Activated T-helper 1 cell treated with anti-CD3 and anti-CD28 coated beads, Interleukin-12 subunit alpha, Interleukin-12 subunit beta, Interleukin-2, Interleukin-4 antibody, amounts not matched to agents 30 ng/mL and 10 ng/mL and 1 ng/mL, durations not matched to agents 14 hours and 24 hours and 36 hours (primary cell): ENCODE measurements at regions of chr11 and their contacts with region 1.

Region 1: DNA sequence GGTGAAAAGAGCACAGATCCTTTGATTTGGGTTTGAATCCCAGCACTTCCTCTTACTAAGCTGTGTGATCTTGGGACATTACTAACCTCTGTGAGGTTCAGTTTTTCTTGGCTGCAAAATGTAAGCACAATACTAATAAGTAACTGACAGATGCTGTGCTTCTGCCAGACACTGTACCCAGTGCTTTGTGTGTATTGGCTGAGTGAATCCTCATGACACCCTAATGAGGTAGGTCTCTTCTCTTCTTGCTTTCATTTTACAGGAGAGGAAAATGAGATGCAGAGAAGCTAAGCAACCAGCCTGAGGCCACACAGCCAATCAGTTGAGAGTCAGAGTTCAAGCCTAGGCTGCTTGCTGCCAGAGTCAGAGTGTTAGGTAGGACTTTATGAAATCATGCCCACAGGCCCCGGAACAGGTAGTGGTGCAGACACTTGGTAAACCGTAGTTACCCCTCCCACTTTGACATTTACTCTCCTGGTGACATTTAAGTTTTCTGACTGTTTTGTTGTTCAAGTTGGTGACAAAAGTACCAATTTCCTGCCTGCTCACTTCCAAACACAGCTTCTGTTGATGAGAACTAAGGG is 21.2 kb downstream of the PTPRJ start:
- DNase-seq: peak; percentile 87
- H3K4me3 Mint-ChIP-seq: peak overlapping the region; percentile 72
- H3K27ac Mint-ChIP-seq: peak overlapping the region; percentile 97
- H3K4me1 Mint-ChIP-seq: peaks cover 82% of the 10 kb centered on the region
- H3K27me3 Mint-ChIP-seq: no peaks in the 10 kb centered on the region

Region 2: GRCh38 chr11:47642099-47642855 is 359.3 kb before region 1 on chr11 and contains the start of gene MTCH2:
- intact Hi-C with region 1: loop called (anchors 2 kb)
- DNase-seq: peak; percentile 95
- H3K4me3 Mint-ChIP-seq: peak within 1 kb of the TSS; percentile 96
- H3K27ac Mint-ChIP-seq: peak within 1 kb of the TSS; percentile 97
- H3K4me1 Mint-ChIP-seq: peaks cover 30% of the 10 kb centered on the region
- H3K27me3 Mint-ChIP-seq: no peaks in the 10 kb centered on the region
- total RNA-seq, gene MTCH2: 116 and 118 TPM in 2 replicates

Region 3: GRCh38 chr11:47932544-47932943 is 69.0 kb before region 1 on chr11:
- intact Hi-C with region 1: loop called (anchors 1 kb)
- DNase-seq: no peak
- H3K4me3 Mint-ChIP-seq: no peak overlapping the region
- H3K27ac Mint-ChIP-seq: no peak overlapping the region
- H3K4me1 Mint-ChIP-seq: peaks cover 23% of the 10 kb centered on the region
- H3K27me3 Mint-ChIP-seq: no peaks in the 10 kb centered on the region

Region 4: DNA sequence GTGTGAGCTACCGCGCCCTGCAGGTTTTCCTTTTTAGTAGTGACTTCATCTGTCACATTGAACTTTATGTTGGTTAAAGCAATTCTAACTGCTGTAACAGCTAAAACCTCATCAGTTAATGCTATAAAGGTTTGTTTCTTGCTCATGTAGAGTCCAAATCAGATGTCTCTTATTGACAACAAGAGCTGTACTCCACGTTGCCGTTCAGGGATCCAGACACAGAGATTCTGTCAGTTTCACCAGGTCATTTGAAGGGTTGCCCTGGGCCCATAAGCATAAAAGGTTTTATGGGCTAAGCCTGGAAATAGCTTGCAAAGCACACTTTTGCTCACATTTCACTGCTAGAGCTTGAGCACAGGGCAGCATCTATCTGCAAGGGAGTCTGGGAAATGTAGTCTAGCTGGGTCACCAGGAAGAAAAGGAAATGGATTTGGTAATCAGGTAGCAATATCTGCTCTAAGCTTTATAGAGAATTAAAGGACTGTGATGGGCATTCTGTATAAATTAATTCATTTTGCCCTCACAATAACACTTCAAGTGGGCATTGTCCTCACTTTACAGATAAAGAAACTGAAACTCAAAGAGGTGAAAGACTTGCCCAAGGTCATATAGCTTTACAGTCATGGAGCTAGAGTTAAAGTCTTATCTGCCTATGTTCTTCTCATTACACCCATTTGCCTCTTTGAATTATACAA is 46.3 kb before region 1 on chr11:
- intact Hi-C with region 1: no loop called
- DNase-seq: no peak
- H3K4me3 Mint-ChIP-seq: no peak overlapping the region
- H3K27ac Mint-ChIP-seq: no peak overlapping the region
- H3K4me1 Mint-ChIP-seq: peaks cover 23% of the 10 kb centered on the region
- H3K27me3 Mint-ChIP-seq: no peaks in the 10 kb centered on the region

Region 5: DNA sequence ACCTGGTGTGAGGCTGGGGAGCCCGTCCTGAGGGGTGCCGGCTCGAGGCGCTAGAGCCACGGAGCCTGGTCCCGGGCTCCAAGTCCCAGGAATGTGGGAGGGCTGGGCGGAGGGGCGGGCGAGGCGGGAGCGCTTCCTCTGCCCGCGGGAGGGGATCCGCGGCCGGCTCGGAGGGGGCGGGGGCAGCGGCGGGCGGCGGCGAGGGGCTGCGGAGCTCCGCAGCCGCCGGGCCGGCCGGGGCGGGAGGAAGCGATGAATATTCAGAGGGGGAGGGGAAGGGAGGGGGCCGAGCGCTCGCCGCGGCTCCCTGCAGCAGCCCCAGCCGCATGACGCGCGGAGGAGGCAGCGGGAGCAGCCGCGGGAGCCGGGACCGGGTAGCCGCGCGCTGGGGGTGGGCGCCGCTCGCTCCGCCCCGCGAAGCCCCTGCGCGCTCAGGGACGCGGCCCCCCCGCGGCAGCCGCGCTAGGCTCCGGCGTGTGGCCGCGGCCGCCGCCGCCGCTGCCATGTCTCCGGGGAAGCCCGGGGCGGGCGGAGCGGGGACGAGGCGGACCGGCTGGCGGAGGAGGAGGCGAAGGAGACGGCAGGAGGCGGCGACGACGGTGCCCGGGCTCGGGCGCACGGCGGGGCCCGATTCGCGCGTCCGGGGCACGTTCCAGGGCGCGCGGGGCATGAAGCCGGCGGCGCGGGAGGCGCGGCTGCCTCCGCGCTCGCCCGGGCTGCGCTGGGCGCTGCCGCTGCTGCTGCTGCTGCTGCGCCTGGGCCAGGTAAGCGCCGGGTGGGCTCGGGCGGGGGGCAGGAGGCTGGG is 21.1 kb before region 1 on chr11 and contains the start of gene PTPRJ:
- intact Hi-C with region 1: loop called (anchors 1 kb)
- DNase-seq: peak; percentile 60
- H3K4me3 Mint-ChIP-seq: peak within 1 kb of the TSS; percentile 92
- H3K27ac Mint-ChIP-seq: peak within 1 kb of the TSS; percentile 54
- H3K4me1 Mint-ChIP-seq: peaks cover 26% of the 10 kb centered on the region
- H3K27me3 Mint-ChIP-seq: peaks cover 12% of the 10 kb centered on the region
- total RNA-seq, gene PTPRJ: 69.6 and 70.3 TPM in 2 replicates

Region 6: DNA sequence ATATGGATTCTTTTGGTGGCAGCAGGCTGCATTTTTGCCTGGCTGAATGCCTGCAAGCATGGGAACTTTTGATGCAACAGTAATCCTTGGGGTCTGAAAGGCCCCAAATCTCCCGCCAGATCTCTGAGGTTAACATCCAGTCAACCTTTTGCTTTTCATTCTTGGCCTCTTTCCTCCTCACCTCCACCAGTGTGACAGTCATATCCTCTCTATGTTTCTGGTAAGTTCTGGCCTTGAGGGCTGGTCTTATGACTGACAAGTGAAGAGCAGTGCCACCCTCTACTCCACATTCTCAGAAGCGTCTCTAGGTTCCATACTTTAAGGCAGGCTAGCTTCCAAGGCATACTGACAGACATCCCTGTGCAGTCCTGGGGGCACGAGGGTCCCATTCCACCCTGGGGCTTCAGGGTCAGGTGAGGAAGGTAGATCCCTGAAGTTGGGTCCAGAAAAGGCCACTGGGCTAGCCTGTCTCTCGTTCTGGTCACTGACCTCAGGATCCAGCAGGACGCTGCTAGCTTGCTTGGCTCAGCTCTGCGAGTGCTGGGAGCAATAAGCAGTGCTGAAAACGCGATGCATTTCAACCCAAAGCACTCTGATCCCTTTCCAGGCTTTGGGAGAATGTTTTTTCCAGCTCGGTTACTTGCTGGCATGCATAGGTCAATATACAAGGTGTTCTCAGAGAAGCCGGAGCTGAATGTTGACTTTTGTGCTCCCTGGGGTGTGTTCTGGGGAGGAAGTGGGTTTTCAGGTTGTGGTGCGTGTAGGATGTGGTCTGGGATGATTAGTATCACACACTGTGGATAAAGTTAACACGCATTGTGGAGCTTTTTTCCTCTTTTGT is 54.0 kb after region 1 on chr11:
- intact Hi-C with region 1: loop called (anchors 1 kb)
- DNase-seq: peak; percentile 81
- H3K4me3 Mint-ChIP-seq: peak overlapping the region; percentile 56
- H3K27ac Mint-ChIP-seq: peak overlapping the region; percentile 84
- H3K4me1 Mint-ChIP-seq: peaks cover 91% of the 10 kb centered on the region
- H3K27me3 Mint-ChIP-seq: no peaks in the 10 kb centered on the region